Endothelial cell of umbilical vein (primary cell): ENCODE measurements at regions of chr17 and their contacts with region 1.

Region 1: DNA sequence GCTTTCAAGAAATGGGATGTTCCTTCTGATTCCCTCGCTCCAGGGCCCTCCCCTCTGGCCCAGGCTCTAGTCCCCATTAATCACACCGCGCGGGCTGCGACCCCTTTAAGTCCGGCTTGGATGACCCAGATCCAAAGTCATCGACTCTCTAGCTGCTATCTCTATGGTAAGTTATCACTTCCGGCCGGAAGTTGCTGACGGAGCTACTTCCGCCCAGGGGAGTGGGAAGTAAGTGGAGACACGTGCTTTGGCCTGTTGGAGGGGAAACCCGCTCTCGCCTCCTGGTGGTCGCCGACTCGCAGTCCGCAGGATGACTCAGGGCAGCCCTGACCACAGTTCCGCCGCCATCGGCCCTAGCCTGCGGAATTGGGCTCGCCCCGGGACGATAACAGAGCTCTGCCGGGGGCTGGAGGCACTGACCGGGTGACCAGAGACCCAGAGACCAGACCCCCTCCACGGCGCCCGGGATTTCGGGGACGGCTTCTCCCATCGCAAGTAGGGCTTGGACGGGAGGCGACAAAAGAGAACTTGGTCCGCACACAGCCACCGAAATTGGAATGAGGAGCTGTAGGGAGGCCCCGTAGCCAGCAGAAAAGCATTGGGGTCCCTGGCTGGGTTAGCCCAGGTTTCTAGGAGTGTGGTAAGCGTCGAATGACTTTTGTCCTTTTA is 52.2 kb upstream of the SEC14L1 start:
- DNase-seq: peak; percentile 96
- H3K4me3 ChIP-seq: peak overlapping the region; percentile 68 to 92 (median 73)
- H3K27ac ChIP-seq: peak overlapping the region; percentile 94
- H3K4me1 ChIP-seq: peaks cover 56% of the 10 kb centered on the region
- H3K27me3 ChIP-seq: no peaks in the 10 kb centered on the region
- CTCF ChIP-seq: peak; percentile 78 to 95
- POLR2A ChIP-seq: peak; percentile 80

Region 2: DNA sequence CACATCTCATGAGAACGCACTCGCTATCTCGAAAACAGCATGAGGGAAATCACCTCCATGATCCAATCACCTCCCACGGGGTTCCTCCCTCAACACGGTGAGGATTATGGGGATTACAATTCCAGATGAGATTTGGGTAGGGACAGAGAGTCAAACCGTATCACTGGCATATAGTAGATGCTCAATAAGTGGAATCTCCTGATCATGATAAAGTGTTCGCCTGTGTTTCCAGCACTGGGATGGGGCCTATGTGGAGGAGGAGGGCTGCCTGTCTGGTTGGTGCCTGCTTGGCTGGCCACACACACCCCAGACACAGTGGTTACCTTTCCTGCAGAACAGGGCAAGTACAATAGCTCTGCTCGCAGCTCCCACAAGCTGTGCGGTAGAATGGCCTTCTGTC is 226.5 kb before region 1 on chr17:
- CTCF ChIA-PET with region 1: no interaction called
- POLR2A ChIA-PET with region 1: no interaction called
- dilution Hi-C with region 1: no loop called
- intact Hi-C with region 1: no loop called
- DNase-seq: no peak
- H3K4me3 ChIP-seq: no peak overlapping the region
- H3K27ac ChIP-seq: no peak overlapping the region
- H3K4me1 ChIP-seq: peaks cover 1% of the 10 kb centered on the region
- H3K27me3 ChIP-seq: no peaks in the 10 kb centered on the region
- CTCF ChIP-seq: no peak
- POLR2A ChIP-seq: no peak

Region 3: DNA sequence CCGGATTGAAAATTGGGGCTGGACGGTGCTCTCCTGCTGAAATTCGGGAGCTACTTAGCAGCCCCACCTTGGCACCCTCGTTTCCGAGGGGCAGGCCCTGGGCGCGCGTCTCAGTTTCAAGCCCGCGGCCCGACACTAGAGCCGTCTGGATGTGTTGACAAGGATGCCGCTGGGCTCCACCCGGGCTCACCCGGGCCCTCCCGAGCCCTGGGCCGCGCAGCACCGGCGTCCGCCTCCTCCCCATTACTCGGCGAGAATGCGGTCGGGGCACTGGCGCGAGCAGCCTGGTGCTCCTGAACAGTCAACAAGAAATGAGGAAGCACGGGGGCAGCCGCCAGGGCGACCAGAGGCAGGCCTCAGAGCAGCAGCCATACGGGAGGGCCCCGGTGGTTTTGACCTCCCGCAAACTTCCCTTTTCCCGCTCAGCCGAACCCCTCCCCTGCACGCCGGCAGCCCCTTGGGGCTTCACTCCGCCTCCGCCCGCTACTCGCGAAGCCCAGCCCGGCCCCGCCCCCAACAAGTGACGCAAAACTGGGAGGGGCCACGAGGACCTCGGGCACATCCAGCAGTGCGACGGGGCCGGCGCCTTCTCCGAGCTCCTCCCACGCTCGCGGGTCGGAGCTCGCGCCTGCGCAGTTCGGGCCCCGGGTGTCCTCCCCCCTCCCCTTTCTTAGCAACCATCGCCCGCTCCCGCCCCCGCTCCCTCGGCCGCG is 51.7 kb after region 1 on chr17:
- CTCF ChIA-PET with region 1: interaction called, 28 read pairs
- POLR2A ChIA-PET with region 1: interaction called, 4 read pairs
- dilution Hi-C with region 1: no loop called
- intact Hi-C with region 1: loop called (anchors 1 kb)
- DNase-seq: peak; percentile 99
- H3K4me3 ChIP-seq: peak overlapping the region in 2 of 3 experiments; percentile 12 to 19
- H3K27ac ChIP-seq: peak overlapping the region; percentile 94
- H3K4me1 ChIP-seq: peaks cover 46% of the 10 kb centered on the region
- H3K27me3 ChIP-seq: no peaks in the 10 kb centered on the region
- CTCF ChIP-seq: peak in 1 of 2 donors; percentile 8
- POLR2A ChIP-seq: peak; percentile 87

Region 4: DNA sequence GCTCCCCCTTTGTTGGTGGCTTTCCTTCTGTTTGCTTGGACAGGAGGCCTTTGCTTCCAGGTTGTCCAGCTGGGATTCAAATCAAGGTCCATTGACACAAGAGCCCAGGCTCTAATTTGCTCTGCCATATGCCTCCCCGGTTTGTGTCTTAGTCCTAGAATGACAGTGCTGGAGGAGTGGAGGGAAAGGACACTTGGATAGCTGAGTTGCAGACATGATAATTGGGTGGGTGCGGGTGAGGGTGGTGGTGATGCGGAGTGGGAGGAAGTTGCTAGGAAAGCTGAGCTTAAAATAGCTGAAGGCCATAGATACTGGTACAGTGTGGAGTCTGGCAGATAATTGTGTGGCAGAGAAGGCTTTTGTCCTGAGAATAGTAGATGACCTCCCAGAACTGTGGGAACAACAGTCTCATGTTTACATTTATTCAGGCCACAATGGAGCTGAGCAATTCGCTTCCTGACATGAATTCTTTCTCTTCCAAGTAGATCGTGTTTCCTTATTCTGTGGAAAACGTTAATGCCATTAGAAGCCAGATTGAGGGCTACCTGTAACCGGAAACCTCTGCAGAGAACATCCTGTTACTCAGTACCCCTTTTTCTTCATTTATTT is 76.0 kb after region 1 on chr17:
- CTCF ChIA-PET with region 1: interaction called, 13 read pairs
- POLR2A ChIA-PET with region 1: interaction called, 5 read pairs
- dilution Hi-C with region 1: no loop called
- intact Hi-C with region 1: no loop called
- DNase-seq: peak; percentile 93
- H3K4me3 ChIP-seq: peak overlapping the region in 1 of 3 experiments; percentile 25
- H3K27ac ChIP-seq: peak overlapping the region; percentile 88
- H3K4me1 ChIP-seq: peaks cover 71% of the 10 kb centered on the region
- H3K27me3 ChIP-seq: no peaks in the 10 kb centered on the region
- CTCF ChIP-seq: no peak
- POLR2A ChIP-seq: no peak

Region 5: GRCh38 chr17:77247048-77247541 is 158.5 kb after region 1 on chr17:
- CTCF ChIA-PET with region 1: interaction called, 17 read pairs
- POLR2A ChIA-PET with region 1: no interaction called
- dilution Hi-C with region 1: no loop called
- intact Hi-C with region 1: loop called (anchors 1 kb)
- DNase-seq: peak; percentile 63
- H3K4me3 ChIP-seq: peak overlapping the region in 2 of 3 experiments; percentile 16 to 62
- H3K27ac ChIP-seq: no peak overlapping the region
- H3K4me1 ChIP-seq: peaks cover 9% of the 10 kb centered on the region
- H3K27me3 ChIP-seq: no peaks in the 10 kb centered on the region
- CTCF ChIP-seq: peak; percentile 87 to 94
- POLR2A ChIP-seq: no peak

Region 6: DNA sequence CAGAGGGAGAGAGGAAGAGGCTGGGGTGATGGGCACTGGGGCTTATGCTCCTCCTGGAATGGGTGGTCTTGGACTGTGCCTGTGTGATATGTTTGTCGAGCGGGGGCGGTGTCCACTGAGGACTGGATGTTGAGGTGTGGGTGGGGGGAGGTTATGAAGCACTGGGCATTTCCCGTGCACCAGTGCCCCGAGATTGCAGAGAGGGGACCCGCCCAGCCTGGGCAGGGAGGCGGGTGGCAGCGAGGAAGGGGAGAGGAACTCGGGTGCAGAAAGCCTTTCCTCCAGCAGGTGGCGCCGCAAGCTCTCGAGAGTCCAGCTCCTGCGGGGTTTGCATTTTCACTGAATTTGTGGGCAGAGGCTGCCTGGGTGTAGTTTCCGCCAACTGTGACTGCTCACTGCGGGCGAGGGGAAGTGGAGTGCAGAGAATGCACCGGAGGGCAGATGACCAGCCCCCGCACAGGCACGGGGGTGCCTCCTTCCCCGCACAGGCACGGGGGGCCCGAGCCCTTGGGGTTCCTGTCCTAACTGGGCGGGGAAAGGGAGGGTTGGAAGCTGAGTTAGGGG is 242.8 kb after region 1 on chr17:
- CTCF ChIA-PET with region 1: no interaction called
- POLR2A ChIA-PET with region 1: no interaction called
- dilution Hi-C with region 1: no loop called
- intact Hi-C with region 1: no loop called
- DNase-seq: peak; percentile 78
- H3K4me3 ChIP-seq: peak overlapping the region in 1 of 3 experiments; percentile 14
- H3K27ac ChIP-seq: no peak overlapping the region
- H3K4me1 ChIP-seq: peaks cover 5% of the 10 kb centered on the region
- H3K27me3 ChIP-seq: no peaks in the 10 kb centered on the region
- CTCF ChIP-seq: peak; percentile 85 to 95
- POLR2A ChIP-seq: no peak